HCT116 (cell line): ENCODE measurements at regions of chr20 and their contacts with region 1.

Region 1: DNA sequence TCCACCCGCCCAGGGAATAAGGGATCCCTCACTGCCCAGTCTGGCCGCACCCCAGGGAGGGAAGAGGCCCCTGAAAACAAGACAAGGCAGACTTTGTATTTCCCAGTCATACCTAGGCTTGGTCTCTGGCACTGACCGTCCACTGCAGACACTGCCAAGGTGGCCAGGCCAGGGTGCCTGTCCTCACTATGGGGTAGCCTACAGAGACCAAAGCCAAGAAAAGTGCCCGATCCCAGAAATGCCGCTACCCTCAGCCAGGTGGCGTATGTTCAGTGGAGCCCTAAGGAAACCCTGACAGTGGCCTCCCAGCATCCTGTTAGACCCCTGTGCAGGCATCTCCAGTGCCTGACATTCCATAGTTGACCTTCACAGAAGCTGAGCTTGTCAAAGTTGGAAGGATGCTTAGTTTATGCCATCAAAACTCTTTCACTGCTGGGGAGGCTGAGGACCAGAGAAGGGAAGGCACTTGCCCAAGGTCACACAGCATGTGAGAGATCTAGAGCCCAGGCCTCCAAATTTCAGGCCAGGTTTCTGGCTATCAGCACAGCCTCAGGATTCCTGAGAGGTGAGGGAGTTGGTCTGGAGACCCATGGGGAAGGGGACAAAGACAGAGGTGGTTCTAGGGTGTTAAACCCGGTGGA is 2.5 kb downstream of the SCRT2 start:
- DNase-seq: no peak
- ATAC-seq: peak; percentile 73
- H3K4me3 ChIP-seq: no peak overlapping the region
- H3K27ac ChIP-seq: no peak overlapping the region
- H3K4me1 ChIP-seq: peaks cover 9 to 10% of the 10 kb centered on the region in 2 experiments; a peak in 3 of 4 replicates
- H3K27me3 ChIP-seq: peaks cover 31% of the 10 kb centered on the region
- CTCF ChIP-seq: peak; percentile 36 to 70 (median 64); a peak in 5 of 6 replicates
- POLR2A ChIP-seq: no peak
- RAD21 ChIP-seq: 0 out of 2 replicates have a peak, but pooled peaks have one; percentile 31

Region 2: GRCh38 chr20:728248-728944 is 55.3 kb after region 1 on chr20:
- CTCF ChIA-PET with region 1: no interaction called
- POLR2A ChIA-PET with region 1: no interaction called
- RAD21 ChIA-PET with region 1: no interaction called
- intact Hi-C with region 1: loop called (anchors 2 kb)
- DNase-seq: no peak
- ATAC-seq: peak; percentile 94
- H3K4me3 ChIP-seq: peak overlapping the region; percentile 33 to 46
- H3K27ac ChIP-seq: no peak overlapping the region; the same call in 1 of the 2 replicates
- H3K4me1 ChIP-seq: peaks cover 3 to 15% of the 10 kb centered on the region in 2 experiments; a peak in 2 of 4 replicates
- H3K27me3 ChIP-seq: no peaks in the 10 kb centered on the region
- CTCF ChIP-seq: peak; percentile 60 to 67 (median 63); a peak in 5 of 6 replicates
- POLR2A ChIP-seq: no peak
- RAD21 ChIP-seq: peak; percentile 74

Region 3: GRCh38 chr20:2349818-2350508 is 1676.9 kb after region 1 on chr20:
- CTCF ChIA-PET with region 1: no interaction called
- POLR2A ChIA-PET with region 1: no interaction called
- RAD21 ChIA-PET with region 1: no interaction called
- intact Hi-C with region 1: no loop called
- DNase-seq: no peak
- ATAC-seq: no peak
- H3K4me3 ChIP-seq: no peak overlapping the region
- H3K27ac ChIP-seq: no peak overlapping the region
- H3K4me1 ChIP-seq: peaks cover 6 to 16% of the 10 kb centered on the region in 2 experiments; a peak in 3 of 4 replicates
- H3K27me3 ChIP-seq: no peaks in the 10 kb centered on the region
- CTCF ChIP-seq: no peak
- POLR2A ChIP-seq: no peak
- RAD21 ChIP-seq: no peak